Gastrocnemius medialis (tissue), 4 donors: ENCODE measurements at regions of chr2 and their contacts with region 1.

Region 1: DNA sequence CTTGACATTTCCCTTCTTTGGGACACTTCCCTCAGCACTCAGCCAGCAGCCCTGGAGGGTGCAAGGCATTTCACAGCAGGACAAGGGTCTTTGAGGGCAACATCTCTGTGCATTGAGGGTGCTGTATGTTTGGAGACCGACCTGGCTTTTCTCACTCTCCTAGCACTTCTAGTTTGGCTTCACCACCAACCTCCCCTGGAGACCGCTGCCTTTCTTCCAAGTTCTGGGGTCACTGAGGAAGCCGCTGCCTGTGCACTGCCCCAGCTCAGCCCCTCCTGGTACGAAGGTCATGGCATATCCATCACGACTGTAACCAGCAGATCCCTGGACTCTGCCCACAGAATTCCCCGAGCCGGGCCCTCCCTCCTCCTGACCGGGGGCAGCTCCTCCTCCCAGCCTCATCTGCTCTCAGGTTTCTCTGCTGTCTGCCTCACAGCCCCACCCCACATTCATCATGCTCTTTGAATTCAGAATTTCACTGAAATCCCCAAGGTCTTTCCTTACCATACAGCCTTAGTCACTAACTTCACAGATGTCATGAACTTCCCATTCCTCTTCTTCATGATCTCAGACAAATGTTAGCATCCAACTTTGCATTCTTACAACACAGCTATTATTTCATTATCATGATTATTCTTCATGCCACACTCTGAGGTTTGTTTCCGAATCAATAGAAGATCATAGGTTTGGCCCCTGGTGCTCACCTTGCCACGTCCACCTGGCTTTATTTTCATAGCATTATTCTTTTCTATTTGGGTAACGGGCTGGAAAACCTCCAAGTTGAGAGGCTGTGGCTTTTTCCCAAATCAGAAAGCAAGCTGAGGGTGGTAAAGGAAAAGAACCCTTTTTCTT is 113.0 kb upstream of the COPS8 start:
- DNase-seq: peak; percentile 57 to 80
- ATAC-seq: peak; percentile 68 to 73
- H3K4me3 ChIP-seq: no peak overlapping the region
- H3K27ac ChIP-seq: peak overlapping the region; percentile 42 to 66 (median 61)
- H3K4me1 ChIP-seq: no peaks in the 10 kb centered on the region
- H3K27me3 ChIP-seq: peaks cover 0 to 11% (median 0%) of the 10 kb centered on the region in 3 donors
- CTCF ChIP-seq: no peak
- POLR2A ChIP-seq: no peak

Region 2: GRCh38 chr2:236663287-236664101 is 309.2 kb before region 1 on chr2:
- in situ Hi-C with region 1: no loop called
- intact Hi-C with region 1: loop called (anchors 5 kb)
- DNase-seq: peak; percentile 35 to 62
- ATAC-seq: peak; percentile 36 to 45
- H3K4me3 ChIP-seq: no peak overlapping the region
- H3K27ac ChIP-seq: peak overlapping the region; percentile 56 to 73 (median 63)
- H3K4me1 ChIP-seq: peaks cover 13 to 17% of the 10 kb centered on the region in 2 donors
- H3K27me3 ChIP-seq: no peaks in the 10 kb centered on the region
- CTCF ChIP-seq: no peak
- POLR2A ChIP-seq: no peak

Region 3: DNA sequence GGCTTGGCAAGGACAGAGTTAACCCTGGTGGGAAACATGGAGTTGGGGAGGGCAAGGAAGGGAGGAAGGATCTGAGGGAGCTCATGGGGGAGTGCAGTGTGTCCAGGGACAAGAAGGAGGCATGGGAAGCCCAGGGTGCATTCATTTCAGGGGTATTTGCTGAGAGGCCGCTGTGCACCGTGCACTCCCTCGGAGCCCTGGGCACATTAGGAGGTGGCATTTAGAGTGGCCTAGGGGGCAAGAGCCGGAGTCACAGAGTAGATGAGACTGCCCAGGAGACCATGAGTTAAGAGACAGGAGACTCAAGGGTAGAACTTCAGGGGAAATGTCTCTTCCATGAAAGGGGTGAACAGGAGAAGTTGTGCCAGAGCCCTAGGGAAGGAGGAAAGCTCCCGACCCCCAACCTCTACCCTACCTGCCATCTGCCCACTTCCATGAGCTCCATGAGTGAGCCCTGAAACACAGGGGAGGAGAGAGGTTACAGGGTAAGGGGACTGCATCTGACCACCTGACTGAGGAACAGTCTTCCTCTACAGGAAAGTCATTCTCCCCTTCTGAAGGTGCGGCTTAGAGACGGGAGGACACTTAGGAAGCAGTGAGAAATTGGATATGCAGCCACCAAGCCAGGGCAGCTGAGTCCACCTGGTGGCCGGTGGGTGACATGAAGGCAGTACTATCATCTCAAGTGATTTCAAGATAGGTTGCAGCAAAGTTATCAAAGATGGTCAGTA is 54.4 kb after region 1 on chr2:
- in situ Hi-C with region 1: no loop called
- intact Hi-C with region 1: no loop called
- DNase-seq: peak; percentile 54 to 73
- ATAC-seq: peak; percentile 69 to 88
- H3K4me3 ChIP-seq: no peak overlapping the region
- H3K27ac ChIP-seq: no peak overlapping the region
- H3K4me1 ChIP-seq: no peaks in the 10 kb centered on the region
- H3K27me3 ChIP-seq: no peaks in the 10 kb centered on the region
- CTCF ChIP-seq: peak; percentile 81 to 91 (median 83)
- POLR2A ChIP-seq: no peak